ENCODE measurements at regions of chr12 and their contacts with region 1.

Region 1: GRCh38 chr12:47307680-47308399 is 228.1 kb upstream of the AMIGO2 start:
- DNase-seq: peak in 8 of 9 donors; percentile 39 to 76 (median 62)
- ATAC-seq: peak; percentile 96
- H3K4me3 ChIP-seq: peak overlapping the region; percentile 56
- H3K4me3 Mint-ChIP-seq: peak overlapping the region; percentile 91 to 98 (median 94)
- H3K27ac ChIP-seq: peak overlapping the region; percentile 69
- H3K27ac Mint-ChIP-seq: peak overlapping the region; percentile 89 to 97 (median 95)
- H3K4me1 ChIP-seq: peaks cover 0 to 3% of the 10 kb centered on the region in 2 donors
- H3K4me1 Mint-ChIP-seq: peaks cover 27 to 61% (median 51%) of the 10 kb centered on the region in 7 donors
- H3K27me3 ChIP-seq: no peaks in the 10 kb centered on the region
- H3K27me3 Mint-ChIP-seq: no peaks in the 10 kb centered on the region

Region 2: DNA sequence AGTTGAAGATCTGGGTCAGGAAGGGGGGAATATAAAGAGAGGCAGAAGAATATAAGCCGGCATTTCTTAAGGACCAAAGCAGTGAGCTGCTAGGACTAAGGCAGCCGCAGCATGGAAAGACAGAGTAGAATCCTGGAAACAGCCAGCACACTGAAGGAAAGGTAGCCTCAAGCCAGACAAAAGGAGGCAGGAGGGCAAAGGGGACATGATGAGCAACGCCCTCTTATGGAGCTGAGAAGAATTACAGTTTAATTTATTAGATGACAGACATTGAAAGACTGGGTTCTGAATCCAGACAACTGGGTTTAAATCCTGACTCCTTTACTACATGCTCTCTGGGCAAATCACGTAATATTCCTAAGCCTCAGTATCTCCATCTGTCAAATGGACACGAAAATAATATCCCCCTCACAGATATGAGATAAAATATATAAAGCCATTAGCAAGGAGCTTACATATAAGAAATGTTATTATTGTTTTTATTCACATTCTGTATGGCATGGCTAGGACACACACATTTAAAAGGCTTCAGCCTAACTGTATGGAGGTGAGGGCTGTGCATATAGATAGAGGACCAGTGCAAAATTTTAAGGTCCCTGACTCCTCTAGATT is 236.5 kb before region 1 on chr12:
- CTCF ChIA-PET with region 1: interaction called, 10 read pairs
- POLR2A ChIA-PET with region 1: interaction called, 5 read pairs
- intact Hi-C with region 1: no loop called
- DNase-seq: peak in 2 of 9 donors; percentile 16 to 33
- ATAC-seq: peak; percentile 51
- H3K4me3 ChIP-seq: no peak overlapping the region
- H3K4me3 Mint-ChIP-seq: no peak overlapping the region
- H3K27ac ChIP-seq: no peak overlapping the region
- H3K27ac Mint-ChIP-seq: peak overlapping the region in 2 of 9 donors; percentile 34 to 41
- H3K4me1 ChIP-seq: no peaks in the 10 kb centered on the region
- H3K4me1 Mint-ChIP-seq: peaks cover 4 to 17% (median 11%) of the 10 kb centered on the region in 7 donors
- H3K27me3 ChIP-seq: no peaks in the 10 kb centered on the region
- H3K27me3 Mint-ChIP-seq: no peaks in the 10 kb centered on the region

Region 3: DNA sequence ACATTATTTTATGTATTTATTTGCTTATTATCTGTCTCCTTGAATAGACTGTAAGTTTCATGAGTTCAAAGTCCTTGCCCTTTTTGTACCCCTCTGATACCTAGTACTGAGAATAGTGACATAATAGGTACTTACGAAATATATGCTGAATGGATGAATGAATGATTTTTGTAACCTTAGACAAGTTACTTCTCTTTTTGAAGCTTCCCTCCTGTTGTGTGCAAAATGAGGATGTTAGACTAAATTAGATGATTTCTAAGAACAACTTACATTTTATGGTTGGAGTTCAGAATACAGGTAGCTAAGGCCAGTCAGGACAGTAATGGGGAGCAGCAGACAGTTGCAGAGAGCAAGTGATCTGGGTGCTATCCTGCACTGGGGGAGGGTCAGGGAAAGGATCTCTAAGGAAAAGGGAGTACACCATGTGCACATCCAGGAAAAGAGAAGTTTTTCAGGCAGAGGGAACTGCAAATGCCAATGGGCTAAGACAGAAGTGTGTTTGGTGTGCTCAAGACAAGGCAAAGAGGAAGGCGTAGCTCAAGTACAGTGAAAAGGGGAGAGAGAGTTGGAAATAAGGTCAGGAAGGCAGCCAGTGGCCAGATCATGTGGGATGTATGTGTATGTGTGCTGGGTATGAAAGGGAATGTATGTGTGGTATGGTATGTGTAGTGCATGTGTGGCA is 168.7 kb before region 1 on chr12:
- CTCF ChIA-PET with region 1: no interaction called
- POLR2A ChIA-PET with region 1: interaction called, 3 read pairs
- intact Hi-C with region 1: loop called in 1 of 2 experiments (anchors 5 kb)
- DNase-seq: no peak
- ATAC-seq: peak; percentile 27
- H3K4me3 ChIP-seq: no peak overlapping the region
- H3K4me3 Mint-ChIP-seq: no peak overlapping the region
- H3K27ac ChIP-seq: no peak overlapping the region
- H3K27ac Mint-ChIP-seq: peak overlapping the region in 3 of 9 donors; percentile 0 to 13 (median 6)
- H3K4me1 ChIP-seq: no peaks in the 10 kb centered on the region
- H3K4me1 Mint-ChIP-seq: peaks cover 0 to 32% (median 17%) of the 10 kb centered on the region in 7 donors
- H3K27me3 ChIP-seq: no peaks in the 10 kb centered on the region
- H3K27me3 Mint-ChIP-seq: no peaks in the 10 kb centered on the region

Region 4: GRCh38 chr12:47207340-47207717 is 100.5 kb before region 1 on chr12:
- CTCF ChIA-PET with region 1: interaction called, 18 read pairs
- POLR2A ChIA-PET with region 1: interaction called, 23 read pairs
- intact Hi-C with region 1: no loop called
- DNase-seq: peak in 4 of 9 donors; percentile 27 to 49 (median 38)
- ATAC-seq: peak; percentile 79
- H3K4me3 ChIP-seq: peak overlapping the region; percentile 42
- H3K4me3 Mint-ChIP-seq: peak overlapping the region; percentile 60 to 99 (median 84)
- H3K27ac ChIP-seq: peak overlapping the region; percentile 76
- H3K27ac Mint-ChIP-seq: peak overlapping the region; percentile 41 to 98 (median 93)
- H3K4me1 ChIP-seq: peaks cover 72 to 78% of the 10 kb centered on the region in 2 donors
- H3K4me1 Mint-ChIP-seq: peaks cover 50 to 93% (median 75%) of the 10 kb centered on the region in 7 donors
- H3K27me3 ChIP-seq: no peaks in the 10 kb centered on the region
- H3K27me3 Mint-ChIP-seq: no peaks in the 10 kb centered on the region

Region 5: DNA sequence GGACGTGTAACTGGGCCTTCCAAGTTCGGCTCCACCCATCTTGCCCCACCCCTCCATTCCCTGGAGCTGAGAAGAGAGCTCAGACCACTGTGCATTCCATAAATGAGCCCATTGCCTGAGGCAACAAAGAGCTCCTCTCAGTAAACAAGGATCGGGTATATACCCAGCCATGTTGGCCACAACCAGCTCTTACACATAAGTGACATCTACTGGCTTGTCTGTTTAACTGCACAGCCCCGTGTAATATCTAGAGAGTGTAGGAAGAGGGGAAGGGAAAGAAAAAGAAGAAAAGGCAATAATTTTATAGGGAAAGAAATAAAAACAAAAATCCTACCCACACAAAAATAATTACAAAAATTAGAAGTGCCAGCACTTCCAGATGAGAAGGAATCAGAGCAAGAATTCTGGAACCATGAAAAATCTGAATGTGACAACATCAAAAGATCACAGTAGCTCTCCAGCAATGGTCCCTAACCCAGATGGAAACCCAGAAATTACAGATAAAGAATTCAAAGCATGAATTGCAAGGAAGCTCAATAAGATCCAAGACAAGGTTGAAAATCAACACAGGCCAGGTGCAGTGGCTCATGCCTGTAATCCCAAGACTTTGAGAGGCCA is 89.9 kb after region 1 on chr12:
- CTCF ChIA-PET with region 1: interaction called, 27 read pairs
- POLR2A ChIA-PET with region 1: interaction called, 24 read pairs
- intact Hi-C with region 1: loop called (anchors 1 kb)
- DNase-seq: peak in 8 of 9 donors; percentile 33 to 71 (median 54)
- ATAC-seq: peak; percentile 86
- H3K4me3 ChIP-seq: peak overlapping the region; percentile 20
- H3K4me3 Mint-ChIP-seq: peak overlapping the region; percentile 29 to 73 (median 64)
- H3K27ac ChIP-seq: no peak overlapping the region
- H3K27ac Mint-ChIP-seq: peak overlapping the region; percentile 61 to 98 (median 91)
- H3K4me1 ChIP-seq: peaks cover 41% of the 10 kb centered on the region in 2 donors
- H3K4me1 Mint-ChIP-seq: peaks cover 28 to 76% (median 52%) of the 10 kb centered on the region in 7 donors
- H3K27me3 ChIP-seq: no peaks in the 10 kb centered on the region
- H3K27me3 Mint-ChIP-seq: no peaks in the 10 kb centered on the region

Region 6: GRCh38 chr12:47686645-47687240 is 378.9 kb after region 1 on chr12:
- CTCF ChIA-PET with region 1: no interaction called
- POLR2A ChIA-PET with region 1: no interaction called
- intact Hi-C with region 1: loop called in 1 of 2 experiments (anchors 2 kb)
- DNase-seq: peak in 7 of 9 donors; percentile 21 to 53 (median 43)
- ATAC-seq: peak; percentile 76
- H3K4me3 ChIP-seq: no peak overlapping the region
- H3K4me3 Mint-ChIP-seq: no peak overlapping the region
- H3K27ac ChIP-seq: no peak overlapping the region
- H3K27ac Mint-ChIP-seq: no peak overlapping the region
- H3K4me1 ChIP-seq: peaks cover 0 to 3% of the 10 kb centered on the region in 2 donors
- H3K4me1 Mint-ChIP-seq: peaks cover 9 to 19% (median 14%) of the 10 kb centered on the region in 7 donors
- H3K27me3 ChIP-seq: no peaks in the 10 kb centered on the region
- H3K27me3 Mint-ChIP-seq: no peaks in the 10 kb centered on the region